ENCODE measurements at regions of chrX and their contacts with region 1.

Region 1: DNA sequence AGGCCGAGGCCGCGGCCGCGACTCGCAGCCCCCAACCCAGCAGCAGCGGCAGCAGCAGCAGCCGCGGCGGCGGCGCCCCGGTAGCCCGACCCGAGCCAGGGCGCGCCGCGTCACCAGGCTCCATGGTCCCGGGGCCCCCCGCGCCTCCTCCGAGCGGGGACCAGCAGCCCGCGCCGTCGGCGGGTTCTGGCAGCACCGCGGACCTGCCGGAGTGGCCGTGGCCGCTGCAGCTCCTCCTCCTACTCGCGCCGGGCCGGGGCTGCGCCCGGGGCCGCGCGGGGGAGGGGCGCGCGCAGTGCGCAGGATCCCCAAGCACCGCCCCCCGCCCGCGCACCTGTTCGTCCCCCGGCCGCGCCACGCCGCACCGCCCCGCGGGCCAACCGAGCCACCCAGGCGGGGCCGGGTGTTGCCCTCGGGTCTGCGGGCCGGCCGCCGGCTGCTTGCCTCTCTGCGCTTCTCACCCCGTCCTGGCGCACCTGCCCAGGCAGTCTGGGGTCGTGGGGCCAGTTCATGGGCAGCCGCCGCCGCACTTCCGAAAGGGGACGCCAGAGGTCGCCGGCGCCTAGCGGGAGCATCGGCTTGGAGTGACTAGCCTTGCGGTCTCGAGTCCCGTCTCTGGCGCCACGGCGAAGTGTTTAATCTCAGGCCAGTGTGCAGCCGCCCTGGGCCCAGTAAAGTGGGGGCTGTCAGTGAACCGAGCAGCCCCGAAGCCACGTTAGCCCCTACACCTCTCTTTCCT is at the start of gene SLC9A7:
- DNase-seq: no peak
- H3K4me3 ChIP-seq: peak within 1 kb of the TSS; percentile 71
- CTCF ChIP-seq: peak; percentile 91

Region 2: GRCh38 chrX:46722742-46723568 is 36.1 kb before region 1 on chrX:
- CTCF ChIA-PET with region 1: no interaction called
- POLR2A ChIA-PET with region 1: no interaction called
- DNase-seq: no peak
- H3K4me3 ChIP-seq: no peak overlapping the region
- CTCF ChIP-seq: no peak

Region 3: GRCh38 chrX:46770817-46771163 is 11.7 kb after region 1 on chrX:
- CTCF ChIA-PET with region 1: interaction called, 10 read pairs
- POLR2A ChIA-PET with region 1: no interaction called
- DNase-seq: peak; percentile 75
- H3K4me3 ChIP-seq: peak overlapping the region; percentile 3
- CTCF ChIP-seq: no peak

Region 4: DNA sequence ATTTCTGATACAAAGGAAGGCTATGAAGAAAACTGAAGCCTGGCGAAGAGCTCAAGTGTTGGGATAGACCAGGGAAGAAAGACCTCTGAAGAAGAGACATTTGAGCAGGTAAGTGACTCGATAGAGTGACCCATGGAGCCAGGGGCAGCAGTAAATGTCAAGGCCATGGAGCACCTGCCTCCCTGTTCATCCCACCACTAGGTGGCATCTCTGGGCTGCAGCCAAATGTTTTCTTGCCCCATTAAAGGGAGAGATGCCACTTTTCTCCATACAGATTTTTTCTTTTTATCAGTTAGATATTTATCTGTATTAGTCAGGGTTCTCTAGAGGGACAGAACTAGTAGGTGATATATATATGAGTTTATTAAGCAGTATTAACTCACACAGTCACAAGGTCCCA is 1072.7 kb after region 1 on chrX:
- CTCF ChIA-PET with region 1: no interaction called
- POLR2A ChIA-PET with region 1: no interaction called
- DNase-seq: no peak
- H3K4me3 ChIP-seq: no peak overlapping the region
- CTCF ChIP-seq: peak; percentile 48

Measured in AG04449 (cell line).